PC-3 (cell line): ENCODE measurements at regions of chr20 and their contacts with region 1.

Region 1: GRCh38 chr20:35339007-35339406 is 46.8 kb upstream of the FAM83C start:
- DNase-seq: peak; percentile 88
- ATAC-seq: peak; percentile 95
- H3K4me3 ChIP-seq: no peak overlapping the region
- H3K27ac ChIP-seq: peak overlapping the region; percentile 52
- H3K4me1 ChIP-seq: peaks cover 23% of the 10 kb centered on the region
- H3K27me3 ChIP-seq: no peaks in the 10 kb centered on the region
- CTCF ChIP-seq: no peak

Region 2: GRCh38 chr20:35215066-35215956 is 123.7 kb before region 1 on chr20:
- CTCF ChIA-PET with region 1: no interaction called
- POLR2A ChIA-PET with region 1: no interaction called
- intact Hi-C with region 1: no loop called
- DNase-seq: peak; percentile 89
- ATAC-seq: peak; percentile 84
- H3K4me3 ChIP-seq: no peak overlapping the region
- H3K27ac ChIP-seq: peak overlapping the region; percentile 39
- H3K4me1 ChIP-seq: peaks cover 18% of the 10 kb centered on the region
- H3K27me3 ChIP-seq: no peaks in the 10 kb centered on the region
- CTCF ChIP-seq: no peak

Region 3: DNA sequence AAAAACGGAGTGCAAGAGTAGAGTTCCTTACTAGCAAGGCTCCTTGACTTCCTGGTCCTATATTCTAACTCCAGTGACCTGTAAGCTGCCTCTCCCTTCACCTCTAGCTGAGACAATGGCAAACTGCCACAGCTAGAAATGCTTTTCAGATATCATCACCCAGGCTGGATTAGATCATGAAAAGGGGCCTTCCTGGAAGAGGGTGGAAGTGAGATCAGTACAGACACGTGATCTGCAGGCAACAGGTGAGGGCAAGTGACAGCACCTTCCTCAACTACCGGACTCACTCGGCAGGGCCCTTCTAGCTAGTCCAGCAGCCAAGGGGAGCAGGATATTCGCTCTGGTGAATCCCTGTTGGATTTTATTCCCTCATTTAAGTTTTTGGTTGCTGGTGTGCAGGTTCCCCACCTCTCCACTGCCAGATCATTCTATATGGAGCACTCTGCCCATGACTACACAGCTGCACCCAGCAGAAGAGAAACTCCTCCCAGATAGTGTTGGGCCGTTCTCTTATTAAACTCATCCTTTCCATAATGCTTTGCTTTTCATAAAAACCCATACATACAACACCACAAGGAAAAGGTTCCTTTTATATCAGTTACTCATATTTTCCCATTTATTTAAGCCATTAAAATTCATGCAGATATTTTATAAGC is 20.4 kb before region 1 on chr20:
- CTCF ChIA-PET with region 1: interaction called, 3 read pairs
- POLR2A ChIA-PET with region 1: no interaction called
- intact Hi-C with region 1: loop called (anchors 1 kb)
- DNase-seq: peak; percentile 99
- ATAC-seq: peak; percentile 66
- H3K4me3 ChIP-seq: peak overlapping the region; percentile 20; the same call in 1 of the 2 replicates
- H3K27ac ChIP-seq: peak overlapping the region; percentile 95
- H3K4me1 ChIP-seq: peaks cover 63% of the 10 kb centered on the region
- H3K27me3 ChIP-seq: no peaks in the 10 kb centered on the region
- CTCF ChIP-seq: no peak